ENCODE measurements at regions of chr11 and their contacts with region 1.

Region 1: DNA sequence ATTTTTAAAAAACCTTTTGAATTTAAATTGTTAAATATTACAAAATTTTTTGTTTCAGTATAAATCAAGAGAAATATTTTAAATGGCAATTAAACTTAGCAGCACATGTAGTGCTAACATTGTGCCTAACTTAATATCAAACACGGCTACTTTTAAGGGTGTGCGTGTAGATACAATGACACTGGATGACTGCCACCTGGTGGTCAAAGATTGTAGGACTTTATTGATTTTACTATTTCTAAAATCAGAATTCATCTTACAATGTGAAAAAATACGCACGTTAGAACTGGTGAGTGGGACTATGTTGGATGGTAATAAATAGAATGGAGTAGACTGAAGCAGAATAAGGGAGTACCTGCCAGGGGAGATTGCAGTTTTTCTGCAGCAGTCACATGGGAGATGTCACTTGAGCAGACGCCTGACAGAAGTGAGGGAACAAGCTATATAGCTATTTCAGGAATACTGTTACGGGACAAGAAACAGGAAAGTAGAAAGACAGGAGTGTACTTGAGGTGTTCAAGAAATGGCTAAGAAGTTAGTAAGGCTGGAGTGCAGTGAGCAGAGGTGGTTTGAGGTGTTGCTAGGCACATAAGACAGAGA is 52.9 kb downstream of the UVRAG start:
- DNase-seq: peak; percentile 79
- ATAC-seq: peak; percentile 76
- H3K4me3 ChIP-seq: no peak overlapping the region
- H3K4me3 Mint-ChIP-seq: no peak overlapping the region
- H3K27ac ChIP-seq: no peak overlapping the region
- H3K27ac Mint-ChIP-seq: no peak overlapping the region
- H3K4me1 ChIP-seq: peaks cover 17 to 27% of the 10 kb centered on the region in 2 donors
- H3K4me1 Mint-ChIP-seq: peaks cover 52% of the 10 kb centered on the region
- H3K27me3 ChIP-seq: no peaks in the 10 kb centered on the region
- H3K27me3 Mint-ChIP-seq: no peaks in the 10 kb centered on the region
- CTCF ChIP-seq: peak; percentile 86

Region 2: DNA sequence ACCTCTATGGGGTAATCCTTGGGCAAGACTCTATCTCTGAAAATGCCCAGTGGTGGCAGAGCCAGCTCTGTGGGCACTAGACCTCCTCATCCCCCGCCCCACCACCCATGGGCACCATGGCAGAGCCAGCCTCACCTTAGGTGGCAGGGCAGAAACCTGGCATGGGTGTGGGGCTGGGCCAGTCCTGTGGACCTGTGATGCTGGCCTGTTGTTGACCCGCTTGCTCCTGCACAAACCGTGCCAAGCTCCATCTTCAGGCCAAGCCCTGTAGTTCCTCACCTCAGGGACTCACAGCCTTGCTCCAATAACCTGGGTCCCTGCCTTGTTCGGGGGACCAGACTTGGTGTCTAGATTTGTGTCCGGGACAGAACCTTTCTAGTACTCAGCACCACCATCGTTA is 314.7 kb before region 1 on chr11:
- CTCF ChIA-PET with region 1: no interaction called
- POLR2A ChIA-PET with region 1: no interaction called
- intact Hi-C with region 1: no loop called
- DNase-seq: no peak
- ATAC-seq: no peak
- H3K4me3 ChIP-seq: no peak overlapping the region
- H3K4me3 Mint-ChIP-seq: no peak overlapping the region
- H3K27ac ChIP-seq: no peak overlapping the region
- H3K27ac Mint-ChIP-seq: no peak overlapping the region
- H3K4me1 ChIP-seq: no peaks in the 10 kb centered on the region
- H3K4me1 Mint-ChIP-seq: no peaks in the 10 kb centered on the region
- H3K27me3 ChIP-seq: peaks cover 0 to 1% (median 0%) of the 10 kb centered on the region in 4 experiments
- H3K27me3 Mint-ChIP-seq: peaks cover 8% of the 10 kb centered on the region
- CTCF ChIP-seq: no peak

Region 3: GRCh38 chr11:75721855-75722668 is 145.8 kb before region 1 on chr11:
- CTCF ChIA-PET with region 1: interaction called, 18 read pairs
- POLR2A ChIA-PET with region 1: no interaction called
- intact Hi-C with region 1: no loop called
- DNase-seq: no peak
- ATAC-seq: no peak
- H3K4me3 ChIP-seq: no peak overlapping the region
- H3K4me3 Mint-ChIP-seq: no peak overlapping the region
- H3K27ac ChIP-seq: no peak overlapping the region
- H3K27ac Mint-ChIP-seq: no peak overlapping the region
- H3K4me1 ChIP-seq: no peaks in the 10 kb centered on the region
- H3K4me1 Mint-ChIP-seq: no peaks in the 10 kb centered on the region
- H3K27me3 ChIP-seq: no peaks in the 10 kb centered on the region
- H3K27me3 Mint-ChIP-seq: no peaks in the 10 kb centered on the region
- CTCF ChIP-seq: no peak

Region 4: DNA sequence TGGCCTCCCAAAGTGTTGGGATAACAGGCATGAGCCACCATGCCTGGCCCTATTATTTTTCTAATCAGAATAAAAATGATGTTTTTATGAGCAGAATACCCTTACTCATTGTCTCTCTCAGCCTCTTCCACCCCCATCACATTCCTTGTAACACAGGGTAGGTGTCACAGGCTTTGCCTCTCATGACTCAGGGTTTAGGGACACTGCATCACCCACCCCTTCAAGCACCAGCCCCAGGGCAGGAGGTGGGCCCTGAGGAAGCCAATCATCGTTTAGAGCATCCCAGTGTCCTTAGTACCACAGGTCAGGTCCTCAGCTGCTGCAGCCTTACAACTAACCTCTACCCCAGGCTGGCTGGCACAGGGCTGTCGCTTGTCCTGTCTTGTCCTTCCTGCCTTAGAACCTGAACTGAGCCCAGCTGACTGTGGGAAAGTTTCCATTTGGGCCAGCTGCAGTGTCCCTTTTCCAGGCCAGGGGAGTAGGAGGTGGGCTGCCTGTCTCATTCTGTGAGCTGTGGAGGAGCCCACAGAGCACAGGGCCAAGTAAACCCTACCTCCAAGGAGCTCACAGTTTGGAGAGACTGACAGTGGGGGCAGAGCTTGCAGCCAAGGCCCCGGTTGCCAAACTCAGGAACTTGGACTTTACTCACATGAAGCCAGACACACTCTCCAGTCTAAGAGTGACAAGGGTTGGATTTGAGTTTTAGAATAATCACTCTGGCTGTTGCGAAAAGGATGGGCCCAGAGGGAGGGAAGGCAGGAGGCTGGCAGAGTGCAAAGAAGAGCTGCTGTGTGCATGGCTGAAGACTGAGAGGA is 72.4 kb before region 1 on chr11:
- CTCF ChIA-PET with region 1: interaction called, 405 read pairs
- POLR2A ChIA-PET with region 1: no interaction called
- intact Hi-C with region 1: no loop called
- DNase-seq: no peak
- ATAC-seq: no peak
- H3K4me3 ChIP-seq: no peak overlapping the region
- H3K4me3 Mint-ChIP-seq: no peak overlapping the region
- H3K27ac ChIP-seq: no peak overlapping the region
- H3K27ac Mint-ChIP-seq: no peak overlapping the region
- H3K4me1 ChIP-seq: peaks cover 0 to 6% of the 10 kb centered on the region in 2 donors
- H3K4me1 Mint-ChIP-seq: peaks cover 8% of the 10 kb centered on the region
- H3K27me3 ChIP-seq: no peaks in the 10 kb centered on the region
- H3K27me3 Mint-ChIP-seq: no peaks in the 10 kb centered on the region
- CTCF ChIP-seq: no peak

Region 5: GRCh38 chr11:75814686-75815344 is 53.1 kb before region 1 on chr11 and contains the start of gene UVRAG:
- CTCF ChIA-PET with region 1: interaction called, 149 read pairs
- POLR2A ChIA-PET with region 1: no interaction called
- intact Hi-C with region 1: loop called (anchors 1 kb)
- DNase-seq: peak; percentile 100
- ATAC-seq: peak; percentile 84
- H3K4me3 ChIP-seq: peak within 1 kb of the TSS; percentile 80 to 98 (median 95)
- H3K4me3 Mint-ChIP-seq: no peak within 1 kb of the TSS
- H3K27ac ChIP-seq: peak within 1 kb of the TSS; percentile 93 to 97
- H3K27ac Mint-ChIP-seq: peak within 1 kb of the TSS; percentile 99
- H3K4me1 ChIP-seq: peaks cover 37 to 63% of the 10 kb centered on the region in 2 donors
- H3K4me1 Mint-ChIP-seq: peaks cover 48% of the 10 kb centered on the region
- H3K27me3 ChIP-seq: no peaks in the 10 kb centered on the region
- H3K27me3 Mint-ChIP-seq: no peaks in the 10 kb centered on the region
- CTCF ChIP-seq: no peak
- total RNA-seq, gene UVRAG: 94.1 and 115 TPM in 2 replicates

Region 6: DNA sequence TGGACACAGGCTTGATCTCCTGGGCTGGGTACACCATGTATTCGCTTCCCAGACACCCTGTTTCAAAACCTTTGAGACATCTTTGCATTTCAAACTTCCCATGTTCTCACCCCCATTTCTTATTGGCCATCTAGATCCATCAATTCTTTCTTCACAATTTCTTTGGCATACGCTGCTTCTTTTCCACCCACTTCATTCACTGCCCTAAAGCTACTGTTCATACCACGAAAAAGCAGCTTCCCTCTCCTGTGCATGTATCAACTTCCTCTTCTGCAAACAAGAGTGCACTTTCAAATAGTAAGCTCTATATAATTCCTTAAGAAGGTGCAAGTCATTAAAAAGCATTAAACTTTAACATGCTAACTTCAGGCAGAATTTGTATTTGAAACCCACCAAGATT is 31.5 kb before region 1 on chr11:
- CTCF ChIA-PET with region 1: interaction called, 33 read pairs
- POLR2A ChIA-PET with region 1: interaction called, 3 read pairs
- intact Hi-C with region 1: loop called (anchors 2 kb)
- DNase-seq: peak; percentile 46
- ATAC-seq: peak; percentile 72
- H3K4me3 ChIP-seq: no peak overlapping the region
- H3K4me3 Mint-ChIP-seq: peak overlapping the region; percentile 36
- H3K27ac ChIP-seq: peak overlapping the region; percentile 39 to 76
- H3K27ac Mint-ChIP-seq: peak overlapping the region; percentile 73
- H3K4me1 ChIP-seq: peaks cover 61 to 75% of the 10 kb centered on the region in 2 donors
- H3K4me1 Mint-ChIP-seq: peaks cover 91% of the 10 kb centered on the region
- H3K27me3 ChIP-seq: no peaks in the 10 kb centered on the region
- H3K27me3 Mint-ChIP-seq: no peaks in the 10 kb centered on the region
- CTCF ChIP-seq: no peak

Region 7: GRCh38 chr11:75878933-75879332 is 11.1 kb after region 1 on chr11:
- CTCF ChIA-PET with region 1: interaction called, 14 read pairs
- POLR2A ChIA-PET with region 1: no interaction called
- intact Hi-C with region 1: no loop called
- DNase-seq: no peak
- ATAC-seq: no peak
- H3K4me3 ChIP-seq: no peak overlapping the region
- H3K4me3 Mint-ChIP-seq: no peak overlapping the region
- H3K27ac ChIP-seq: peak overlapping the region in 1 of 2 donors; percentile 19
- H3K27ac Mint-ChIP-seq: peak overlapping the region; percentile 55
- H3K4me1 ChIP-seq: peaks cover 18 to 21% of the 10 kb centered on the region in 2 donors
- H3K4me1 Mint-ChIP-seq: peaks cover 41% of the 10 kb centered on the region
- H3K27me3 ChIP-seq: no peaks in the 10 kb centered on the region
- H3K27me3 Mint-ChIP-seq: no peaks in the 10 kb centered on the region
- CTCF ChIP-seq: no peak

Region 8: GRCh38 chr11:76152086-76152681 is 284.3 kb after region 1 on chr11:
- CTCF ChIA-PET with region 1: interaction called, 22 read pairs
- POLR2A ChIA-PET with region 1: no interaction called
- intact Hi-C with region 1: no loop called
- DNase-seq: peak; percentile 80
- ATAC-seq: peak; percentile 82
- H3K4me3 ChIP-seq: peak overlapping the region; percentile 15 to 55 (median 47)
- H3K4me3 Mint-ChIP-seq: peak overlapping the region; percentile 74
- H3K27ac ChIP-seq: no peak overlapping the region
- H3K27ac Mint-ChIP-seq: peak overlapping the region; percentile 21
- H3K4me1 ChIP-seq: peaks cover 18 to 21% of the 10 kb centered on the region in 2 donors
- H3K4me1 Mint-ChIP-seq: peaks cover 25% of the 10 kb centered on the region
- H3K27me3 ChIP-seq: no peaks in the 10 kb centered on the region
- H3K27me3 Mint-ChIP-seq: no peaks in the 10 kb centered on the region
- CTCF ChIP-seq: peak; percentile 93

Measured in B cell (primary cell).